Ascending aorta (tissue), 2 donors: ENCODE measurements at regions of chr16 and their contacts with region 1.

Region 1: GRCh38 chr16:1351582-1352362 is at the starts of genes GNPTG and TSR3:
- DNase-seq: peak in 1 of 2 donors; percentile 89
- H3K4me3 ChIP-seq: peak within 1 kb of the TSS; percentile 92 to 93
- H3K27ac ChIP-seq: peak within 1 kb of the TSS in 1 of 2 donors; percentile 33
- H3K4me1 ChIP-seq: peaks cover 9 to 16% of the 10 kb centered on the region in 2 donors
- H3K27me3 ChIP-seq: no peaks in the 10 kb centered on the region
- CTCF ChIP-seq: no peak
- total RNA-seq, gene GNPTG: 86.6 TPM
- total RNA-seq, gene TSR3: 143 TPM

Region 2: GRCh38 chr16:1308977-1309885 is 42.5 kb before region 1 on chr16 and contains the start of gene UBE2I:
- intact Hi-C with region 1: loop called (anchors 2 kb)
- DNase-seq: peak; percentile 86 to 98
- H3K4me3 ChIP-seq: peak within 1 kb of the TSS; percentile 83 to 91
- H3K27ac ChIP-seq: peak within 1 kb of the TSS; percentile 96 to 99
- H3K4me1 ChIP-seq: peaks cover 21 to 24% of the 10 kb centered on the region in 2 donors
- H3K27me3 ChIP-seq: no peaks in the 10 kb centered on the region
- CTCF ChIP-seq: no peak
- total RNA-seq, gene UBE2I: 141 TPM

Region 3: GRCh38 chr16:1378804-1379303 is 27.1 kb after region 1 on chr16:
- intact Hi-C with region 1: loop called (anchors 1 kb)
- DNase-seq: peak; percentile 73 to 93
- H3K4me3 ChIP-seq: peak overlapping the region; percentile 60 to 73
- H3K27ac ChIP-seq: peak overlapping the region; percentile 88 to 92
- H3K4me1 ChIP-seq: peaks cover 11 to 15% of the 10 kb centered on the region in 2 donors
- H3K27me3 ChIP-seq: no peaks in the 10 kb centered on the region
- CTCF ChIP-seq: no peak